Mammary epithelial cell (primary cell): ENCODE measurements at regions of chr22 and their contacts with region 1.

Region 1: GRCh38 chr22:39170825-39171622 is 18.5 kb upstream of the CBX7 start:
- DNase-seq: peak; percentile 69
- H3K4me3 ChIP-seq: no peak overlapping the region
- H3K27ac ChIP-seq: no peak overlapping the region
- H3K4me1 ChIP-seq: peaks cover 31% of the 10 kb centered on the region
- H3K27me3 ChIP-seq: no peaks in the 10 kb centered on the region
- CTCF ChIP-seq: peak; percentile 70 to 94

Region 2: DNA sequence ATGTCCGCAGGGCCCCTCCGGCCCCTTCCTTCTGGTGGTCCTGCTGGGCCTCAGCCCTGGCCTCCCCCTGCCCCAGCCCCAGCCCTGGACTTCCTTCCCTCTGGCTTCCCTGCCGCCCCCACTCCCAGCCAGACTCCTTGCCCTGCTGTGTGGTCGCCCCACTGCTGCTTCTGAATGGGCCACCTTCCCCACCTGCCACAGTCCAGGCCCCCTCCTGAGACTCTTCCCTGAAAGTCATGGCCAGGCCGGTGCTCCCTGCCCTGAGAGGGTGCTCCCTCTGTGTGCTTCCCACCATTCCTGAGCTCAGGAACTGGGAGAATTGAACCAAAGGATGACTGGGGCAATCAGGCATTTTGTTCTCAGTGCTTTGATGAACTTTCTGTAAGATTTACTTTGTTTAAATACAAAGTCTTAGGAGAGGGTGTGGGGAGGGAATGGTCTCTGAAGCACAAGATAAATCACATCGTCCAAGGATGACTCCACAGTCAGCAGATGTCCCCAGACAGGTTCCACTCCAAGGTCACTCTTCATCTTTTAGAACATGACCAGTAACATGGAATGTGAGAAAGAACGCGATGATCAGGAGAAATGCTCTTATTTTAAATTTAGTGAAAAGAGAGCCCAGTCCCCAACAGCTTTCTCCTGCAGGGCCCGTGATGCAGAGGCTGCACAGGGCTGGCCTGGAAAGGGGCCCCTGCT is 149.3 kb before region 1 on chr22:
- CTCF ChIA-PET with region 1: no interaction called
- dilution Hi-C with region 1: no loop called
- in situ Hi-C with region 1: no loop called
- intact Hi-C with region 1: no loop called
- DNase-seq: no peak
- H3K4me3 ChIP-seq: peak overlapping the region in 2 of 3 experiments; percentile 30 to 33
- H3K27ac ChIP-seq: no peak overlapping the region
- H3K4me1 ChIP-seq: peaks cover 12% of the 10 kb centered on the region
- H3K27me3 ChIP-seq: no peaks in the 10 kb centered on the region
- CTCF ChIP-seq: no peak

Region 3: GRCh38 chr22:39205338-39206021 is 34.5 kb after region 1 on chr22:
- CTCF ChIA-PET with region 1: no interaction called
- dilution Hi-C with region 1: no loop called
- in situ Hi-C with region 1: no loop called
- intact Hi-C with region 1: no loop called
- DNase-seq: peak; percentile 78
- H3K4me3 ChIP-seq: no peak overlapping the region
- H3K27ac ChIP-seq: peak overlapping the region; percentile 51
- H3K4me1 ChIP-seq: peaks cover 35% of the 10 kb centered on the region
- H3K27me3 ChIP-seq: no peaks in the 10 kb centered on the region
- CTCF ChIP-seq: no peak

Region 4: DNA sequence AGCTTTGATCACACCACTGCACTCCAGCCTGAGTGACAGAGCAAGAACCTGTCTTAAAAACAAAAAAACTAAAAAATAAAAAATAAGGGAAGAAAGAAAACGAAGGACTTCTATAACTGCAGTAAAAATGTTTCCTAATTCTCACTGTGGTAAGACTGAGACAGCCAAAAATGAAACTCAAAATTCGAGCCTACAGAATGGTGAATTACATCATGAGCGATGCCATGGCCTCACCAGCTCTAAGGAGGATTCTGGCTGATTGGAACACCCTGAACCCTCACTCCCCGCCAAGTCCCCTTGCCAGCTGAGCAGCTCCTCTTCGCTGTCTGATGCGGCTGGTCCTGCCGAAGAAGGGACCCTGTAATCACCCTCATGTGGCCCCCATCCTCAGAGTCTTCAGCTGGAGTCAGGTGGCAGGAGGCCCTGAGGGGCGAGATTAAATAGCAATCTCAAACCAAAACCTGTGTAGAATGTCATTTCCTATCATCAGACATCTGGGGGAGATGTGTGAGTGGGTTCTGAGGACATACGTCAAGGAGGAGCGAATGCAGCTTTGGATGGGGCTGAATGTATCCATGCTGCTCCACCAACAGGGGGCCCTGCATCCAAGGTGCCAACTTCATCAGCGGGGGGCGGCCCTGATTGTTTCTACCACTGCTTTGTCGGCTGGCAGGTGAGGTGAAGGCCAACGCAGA is 44.5 kb after region 1 on chr22:
- CTCF ChIA-PET with region 1: no interaction called
- dilution Hi-C with region 1: no loop called
- in situ Hi-C with region 1: no loop called
- intact Hi-C with region 1: loop called (anchors 2 kb)
- DNase-seq: no peak
- H3K4me3 ChIP-seq: no peak overlapping the region
- H3K27ac ChIP-seq: peak overlapping the region; percentile 46
- H3K4me1 ChIP-seq: peaks cover 37% of the 10 kb centered on the region
- H3K27me3 ChIP-seq: no peaks in the 10 kb centered on the region
- CTCF ChIP-seq: no peak

Region 5: GRCh38 chr22:39244496-39245129 is 73.6 kb after region 1 on chr22 and contains the start of gene PDGFB:
- CTCF ChIA-PET with region 1: no interaction called
- dilution Hi-C with region 1: no loop called
- in situ Hi-C with region 1: no loop called
- intact Hi-C with region 1: loop called (anchors 1 kb)
- DNase-seq: peak; percentile 44
- H3K4me3 ChIP-seq: peak within 1 kb of the TSS; percentile 64 to 74 (median 70)
- H3K27ac ChIP-seq: no peak within 1 kb of the TSS
- H3K4me1 ChIP-seq: peaks cover 30% of the 10 kb centered on the region
- H3K27me3 ChIP-seq: no peaks in the 10 kb centered on the region
- CTCF ChIP-seq: no peak
- total RNA-seq, gene PDGFB: 11.2 to 29.2 TPM

Region 6: GRCh38 chr22:39283322-39284004 is 112.4 kb after region 1 on chr22:
- CTCF ChIA-PET with region 1: interaction called, 11 read pairs
- dilution Hi-C with region 1: no loop called
- in situ Hi-C with region 1: no loop called
- intact Hi-C with region 1: loop called (anchors 1 kb)
- DNase-seq: peak; percentile 52
- H3K4me3 ChIP-seq: no peak overlapping the region
- H3K27ac ChIP-seq: peak overlapping the region; percentile 11
- H3K4me1 ChIP-seq: peaks cover 21% of the 10 kb centered on the region
- H3K27me3 ChIP-seq: no peaks in the 10 kb centered on the region
- CTCF ChIP-seq: no peak